Cardiac septum (tissue), 1 donor: ENCODE measurements at regions of chr3 and their contacts with region 1.

Region 1: GRCh38 chr3:3200632-3201212 is 21.2 kb upstream of the CRBN start:
- DNase-seq: no peak

Region 2: DNA sequence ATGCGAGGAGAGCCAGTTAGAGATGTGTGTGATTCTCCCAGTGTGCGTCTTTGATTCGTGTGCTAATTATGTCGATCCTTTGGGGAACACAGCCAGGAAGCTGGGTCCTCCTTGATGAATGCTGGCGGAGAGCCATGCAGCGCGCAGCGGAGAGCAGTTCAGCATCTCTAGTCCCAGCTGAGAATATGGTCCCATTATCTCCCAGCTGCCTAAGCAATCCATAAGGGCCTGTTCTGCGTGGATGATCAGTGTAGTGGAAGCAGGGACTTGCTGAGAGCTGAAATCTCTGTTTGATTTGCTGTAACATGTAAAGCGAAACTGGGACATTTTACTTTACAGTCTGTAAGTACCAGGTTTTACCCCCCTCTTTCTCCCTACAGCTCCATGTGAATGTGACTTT is 689.4 kb before region 1 on chr3:
- intact Hi-C with region 1: no loop called
- DNase-seq: no peak

Region 3: GRCh38 chr3:2595486-2596202 is 605.1 kb before region 1 on chr3:
- intact Hi-C with region 1: no loop called
- DNase-seq: no peak

Region 4: DNA sequence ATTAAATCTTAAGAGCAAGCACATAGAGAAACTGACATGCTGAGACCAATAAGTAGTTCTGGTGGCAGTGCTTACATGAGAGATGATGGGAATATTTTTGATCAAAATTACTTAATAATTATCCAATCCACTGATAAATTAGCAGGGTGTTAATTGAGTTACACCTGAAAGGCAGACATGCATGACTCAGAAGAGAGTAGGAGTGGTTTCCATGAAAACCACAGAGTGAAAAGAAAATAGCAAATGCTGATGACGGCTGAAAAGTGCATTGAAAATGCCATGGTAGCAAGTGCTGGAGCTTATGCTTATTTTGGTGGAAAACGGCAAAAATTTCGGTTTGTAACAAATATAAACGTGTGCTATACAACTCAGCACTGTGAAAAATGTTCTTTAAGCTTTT is 330.8 kb after region 1 on chr3:
- intact Hi-C with region 1: no loop called
- DNase-seq: no peak

Region 5: DNA sequence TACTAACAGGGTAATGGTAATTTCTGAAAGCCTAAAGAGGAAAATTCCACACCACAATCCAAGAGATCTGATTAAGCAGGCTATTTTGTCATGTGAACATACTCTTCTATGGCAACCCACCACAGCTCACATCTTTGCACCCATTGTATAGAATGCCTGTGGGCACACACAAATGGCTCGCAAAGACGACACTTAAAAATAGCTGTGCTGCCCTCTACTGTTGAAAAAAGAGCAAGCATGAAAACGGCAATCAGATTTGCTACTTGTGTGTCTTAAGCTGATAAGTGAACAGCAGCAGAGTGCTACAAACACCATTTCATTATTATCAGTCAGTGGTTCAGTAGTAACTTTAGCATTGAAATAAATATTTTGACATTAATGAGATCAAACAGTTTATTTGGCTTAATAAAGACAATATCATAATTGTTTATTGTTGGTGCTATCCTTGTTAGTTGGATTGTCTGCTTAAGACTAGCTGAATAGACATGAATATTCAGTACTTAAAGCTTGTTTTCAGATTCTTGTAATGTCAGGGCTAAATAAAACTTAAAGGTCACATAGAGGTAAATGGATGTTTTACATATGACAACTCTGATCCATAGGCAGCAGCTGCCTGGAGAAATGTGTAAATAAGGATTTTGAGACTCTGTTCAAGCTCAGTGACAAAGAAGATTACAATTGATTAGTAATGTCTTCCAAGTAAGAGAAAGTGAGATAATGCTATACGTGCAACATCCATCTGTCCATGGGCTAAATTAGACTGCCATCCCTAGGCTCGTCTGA is 797.6 kb after region 1 on chr3:
- intact Hi-C with region 1: loop called (anchors 5 kb)
- DNase-seq: no peak

Region 6: DNA sequence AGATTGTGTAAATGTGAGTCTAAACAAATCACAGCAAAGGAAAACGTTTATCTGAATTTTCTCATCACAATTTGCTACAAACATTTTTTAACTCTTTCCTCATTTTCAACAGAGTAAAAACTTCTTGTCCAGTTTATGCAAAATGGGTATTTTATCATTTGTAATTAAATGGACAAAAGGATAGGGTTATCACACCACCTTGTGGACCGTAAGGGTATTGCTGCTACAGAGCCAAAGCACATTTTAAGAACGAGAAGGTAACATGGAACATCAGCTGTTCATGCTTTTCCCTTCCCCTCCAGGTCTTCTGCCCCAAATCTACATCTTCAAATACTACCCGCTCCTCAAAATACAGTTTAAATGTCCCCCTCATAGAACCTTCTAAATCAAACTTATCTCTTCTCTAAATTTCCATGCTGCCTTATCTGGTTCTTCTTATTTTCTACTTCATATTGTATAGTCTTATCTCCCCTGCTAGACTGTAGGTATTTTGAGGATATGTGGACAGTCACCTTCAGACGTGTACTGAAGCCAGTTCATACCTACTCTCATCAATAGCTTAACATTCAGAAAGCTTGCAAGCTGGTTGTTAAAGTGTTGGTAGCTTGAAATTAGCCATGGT is 1089.7 kb after region 1 on chr3:
- intact Hi-C with region 1: loop called (anchors 1 kb)
- DNase-seq: no peak